HEK293T (cell line): ENCODE measurements at regions of chr5 and their contacts with region 1.

Region 1: DNA sequence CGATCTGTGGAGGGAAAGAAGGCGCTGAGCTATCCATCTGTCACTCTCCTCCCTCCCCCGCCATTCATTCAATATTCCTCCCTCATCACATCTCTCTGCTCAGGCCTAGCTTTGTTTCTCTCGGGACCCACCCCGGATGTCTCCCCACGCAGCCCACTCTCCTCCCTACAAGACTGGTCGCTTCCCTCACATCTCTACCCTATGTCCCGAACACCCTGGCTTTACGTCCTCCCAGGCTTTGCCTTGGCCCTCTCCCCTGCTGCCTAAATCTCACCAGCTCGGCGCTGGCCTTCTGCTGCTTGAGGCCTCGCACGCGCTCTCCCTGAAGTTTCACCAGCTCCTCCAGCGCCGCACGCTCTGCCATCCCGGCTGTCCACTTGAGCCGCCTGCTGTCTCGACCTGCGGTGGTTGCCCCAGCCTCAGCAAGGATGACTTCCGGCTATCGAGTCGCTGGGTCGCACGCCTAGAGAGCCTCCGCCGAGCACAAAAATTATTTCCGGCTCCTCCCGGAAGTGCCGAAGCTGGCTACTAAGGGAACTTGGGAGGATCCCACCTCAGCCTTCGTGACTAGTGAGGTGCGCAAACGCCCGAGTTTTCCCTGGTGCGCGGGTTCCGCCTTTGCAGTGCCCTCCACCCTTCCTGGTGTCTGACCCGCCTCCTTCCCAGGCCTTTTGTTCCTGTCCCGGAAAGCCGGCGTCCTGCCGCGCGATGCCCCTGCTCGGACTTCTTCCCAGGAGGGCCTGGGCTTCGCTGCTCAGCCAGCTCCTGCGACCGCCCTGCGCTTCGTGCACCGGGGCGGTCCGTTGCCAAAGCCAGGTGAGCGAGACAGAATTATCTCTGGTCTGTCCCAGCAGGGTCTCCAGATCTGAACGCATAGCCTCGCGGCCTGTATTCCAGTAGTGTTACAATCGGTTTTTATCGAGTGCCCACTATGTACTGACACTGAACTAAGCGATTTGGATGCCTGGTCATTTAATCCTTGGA is at the starts of genes HARS1 and HARS2:
- DNase-seq: peak; percentile 92

Region 2: DNA sequence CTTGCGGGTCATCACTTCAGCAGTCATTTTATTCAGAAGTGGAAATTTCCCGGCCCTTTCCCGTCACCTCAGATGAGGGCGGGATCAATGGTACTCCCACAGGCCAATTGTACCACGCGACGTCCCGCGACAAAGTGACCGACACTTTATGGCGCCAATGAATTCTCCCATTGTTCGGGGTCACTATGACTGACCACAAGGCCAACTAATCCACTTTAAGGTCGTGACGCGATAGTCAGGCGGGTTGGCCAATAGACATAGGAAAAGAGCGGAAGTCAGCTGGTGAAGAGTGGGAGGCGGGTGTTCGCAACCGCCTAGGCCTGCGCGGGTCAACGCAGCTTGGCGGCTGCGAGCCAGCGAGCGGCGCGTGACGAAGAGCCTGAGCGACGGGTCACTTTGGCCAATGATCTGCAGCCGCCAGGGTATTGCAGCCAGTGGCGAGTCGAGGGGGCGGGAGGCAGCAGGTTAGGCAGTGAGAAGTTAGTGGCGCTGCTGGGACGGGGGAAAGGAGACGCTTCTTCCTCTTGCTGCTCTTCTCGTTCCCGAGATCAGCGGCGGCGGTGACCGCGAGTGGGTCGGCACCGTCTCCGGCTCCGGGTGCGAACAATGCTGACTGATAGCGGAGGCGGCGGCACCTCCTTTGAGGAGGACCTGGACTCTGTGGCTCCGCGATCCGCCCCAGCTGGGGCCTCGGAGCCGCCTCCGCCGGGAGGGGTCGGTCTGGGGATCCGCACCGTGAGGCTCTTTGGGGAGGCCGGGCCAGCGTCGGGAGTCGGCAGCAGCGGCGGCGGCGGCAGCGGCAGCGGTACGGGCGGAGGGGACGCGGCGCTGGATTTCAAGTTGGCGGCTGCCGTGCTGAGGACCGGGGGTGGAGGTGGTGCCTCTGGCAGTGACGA is 289.6 kb before region 1 on chr5 and contains the start of gene ANKHD1:
- CTCF ChIA-PET with region 1: no interaction called
- POLR2A ChIA-PET with region 1: interaction called, 10 read pairs
- DNase-seq: peak; percentile 90

Region 3: DNA sequence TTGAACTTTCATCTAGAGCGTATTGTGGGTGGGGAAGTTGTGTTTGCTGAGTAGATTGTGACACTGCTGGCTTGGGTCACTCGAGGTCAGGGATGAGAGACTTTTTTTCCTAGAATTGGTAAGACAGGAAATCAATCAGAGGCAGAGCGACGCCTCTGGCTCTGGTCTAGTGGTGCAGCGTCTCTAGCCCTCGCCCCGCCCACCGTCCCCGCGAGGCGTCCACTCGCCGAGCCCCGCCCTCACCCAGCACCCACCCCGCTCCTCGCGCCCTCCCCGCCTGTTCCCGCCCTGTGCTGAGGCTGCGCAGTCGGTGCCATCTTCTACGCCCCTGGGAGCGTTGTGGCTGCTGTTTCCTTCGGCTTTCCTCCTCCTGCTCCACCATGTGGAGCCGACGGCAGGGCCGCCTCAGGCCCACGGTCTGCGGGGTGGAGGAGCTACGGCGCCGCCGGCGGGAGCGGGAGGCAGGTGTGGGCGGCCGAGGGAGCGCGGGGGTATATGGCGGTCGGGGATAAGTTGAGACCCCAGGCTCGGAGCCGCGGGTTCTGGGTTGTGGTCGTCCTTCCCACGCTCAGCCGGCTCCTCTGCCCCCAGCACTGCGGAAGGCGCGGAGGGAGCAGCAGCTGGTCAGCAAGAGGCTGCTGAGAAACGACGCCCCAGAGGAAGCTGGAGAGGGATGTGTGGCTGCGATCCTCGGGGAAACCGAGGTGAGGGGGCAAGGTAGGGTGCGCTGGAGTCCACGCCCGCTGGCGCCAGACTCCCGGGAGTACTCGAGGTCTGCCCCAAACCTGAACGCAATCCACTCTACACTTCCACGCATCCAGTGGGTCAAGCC is 51.9 kb before region 1 on chr5 and contains the start of gene TMCO6:
- CTCF ChIA-PET with region 1: no interaction called
- POLR2A ChIA-PET with region 1: interaction called, 11 read pairs
- DNase-seq: peak; percentile 99

Region 4: DNA sequence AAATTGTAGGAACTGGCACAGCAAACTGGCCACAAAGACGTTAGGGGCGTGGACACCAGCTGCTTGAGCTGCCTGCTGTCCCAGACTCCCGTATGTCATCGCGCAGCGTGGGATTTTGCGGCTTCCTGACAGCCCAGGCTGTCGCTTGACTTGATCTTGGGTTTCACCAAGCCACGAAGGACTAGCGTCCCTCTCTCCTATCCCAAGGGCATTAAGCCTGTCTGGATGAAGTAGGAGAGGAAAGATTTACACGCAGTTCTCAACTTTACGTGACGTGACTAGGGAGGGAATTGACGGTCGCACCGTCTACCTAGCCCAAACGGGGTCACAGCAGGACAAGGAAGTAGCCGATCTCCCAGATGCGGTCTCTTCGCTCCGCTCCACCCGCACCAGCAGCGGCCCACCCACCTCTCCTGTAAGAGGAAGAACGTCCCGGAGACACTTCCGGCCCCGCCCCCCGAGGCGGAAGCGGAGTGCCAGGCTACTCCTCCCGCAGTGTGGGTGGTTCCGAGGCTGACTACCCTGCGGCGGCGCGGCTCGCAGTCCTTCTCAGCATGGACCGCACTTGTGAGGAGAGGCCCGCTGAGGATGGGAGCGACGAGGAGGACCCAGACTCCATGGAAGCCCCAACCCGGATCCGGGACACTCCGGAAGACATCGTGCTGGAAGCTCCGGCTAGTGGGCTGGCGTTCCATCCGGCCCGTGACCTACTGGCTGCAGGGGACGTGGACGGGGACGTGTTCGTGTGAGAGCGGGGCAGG is 26.7 kb before region 1 on chr5 and contains the start of gene WDR55:
- CTCF ChIA-PET with region 1: no interaction called
- POLR2A ChIA-PET with region 1: interaction called, 13 read pairs
- DNase-seq: peak; percentile 94

Region 5: DNA sequence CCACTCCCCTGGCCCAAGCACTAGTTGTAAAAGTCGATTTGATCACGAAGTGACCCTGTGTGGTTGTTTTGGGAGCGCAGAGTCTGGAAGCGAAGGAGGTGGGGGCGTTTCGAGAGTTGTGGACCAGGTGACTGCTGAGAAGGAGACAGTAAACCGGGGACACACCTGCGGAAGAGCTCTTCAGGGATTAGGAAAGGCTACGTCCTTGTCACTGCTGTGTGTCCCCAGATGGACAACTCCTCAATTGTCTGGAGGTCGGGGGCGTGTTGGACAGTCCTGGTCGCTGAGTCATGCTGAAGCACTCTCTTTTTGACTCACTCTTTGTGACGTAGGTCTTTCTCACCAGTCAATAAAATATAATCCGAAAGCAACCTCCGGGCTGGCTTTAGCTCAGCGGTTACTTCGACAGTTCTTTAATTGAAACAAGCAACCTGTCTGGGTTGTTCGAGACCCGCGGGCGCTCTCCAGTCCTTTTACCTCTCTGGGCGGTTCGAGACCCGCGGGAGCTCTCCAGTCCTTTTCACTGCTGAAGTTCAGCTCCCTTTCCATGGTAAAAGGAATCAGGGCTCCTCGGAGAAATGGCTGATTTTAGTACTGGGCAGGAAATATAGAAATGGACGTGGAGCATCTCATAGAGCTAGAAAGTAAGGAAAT is 19.8 kb after region 1 on chr5:
- CTCF ChIA-PET with region 1: interaction called, 5 read pairs
- POLR2A ChIA-PET with region 1: interaction called, 22 read pairs
- DNase-seq: peak; percentile 73